A549 (cell line): ENCODE measurements at regions of chr3 and their contacts with region 1.

Region 1: GRCh38 chr3:100334488-100335351 is at the start of gene NIT2:
- DNase-seq: peak; percentile 86
- ATAC-seq: peak; percentile 97 to 98
- H3K4me3 ChIP-seq: peak within 1 kb of the TSS; percentile 93
- H3K27ac ChIP-seq: peak within 1 kb of the TSS; percentile 94 to 96
- H3K4me1 ChIP-seq: peaks cover 12% of the 10 kb centered on the region
- CTCF ChIP-seq: no peak
- EP300 ChIP-seq: no peak
- POLR2A ChIP-seq: peak; percentile 91
- RAD21 ChIP-seq: no peak
- polyA plus RNA-seq, gene NIT2: 122 and 140 TPM in 2 replicates

Region 2: DNA sequence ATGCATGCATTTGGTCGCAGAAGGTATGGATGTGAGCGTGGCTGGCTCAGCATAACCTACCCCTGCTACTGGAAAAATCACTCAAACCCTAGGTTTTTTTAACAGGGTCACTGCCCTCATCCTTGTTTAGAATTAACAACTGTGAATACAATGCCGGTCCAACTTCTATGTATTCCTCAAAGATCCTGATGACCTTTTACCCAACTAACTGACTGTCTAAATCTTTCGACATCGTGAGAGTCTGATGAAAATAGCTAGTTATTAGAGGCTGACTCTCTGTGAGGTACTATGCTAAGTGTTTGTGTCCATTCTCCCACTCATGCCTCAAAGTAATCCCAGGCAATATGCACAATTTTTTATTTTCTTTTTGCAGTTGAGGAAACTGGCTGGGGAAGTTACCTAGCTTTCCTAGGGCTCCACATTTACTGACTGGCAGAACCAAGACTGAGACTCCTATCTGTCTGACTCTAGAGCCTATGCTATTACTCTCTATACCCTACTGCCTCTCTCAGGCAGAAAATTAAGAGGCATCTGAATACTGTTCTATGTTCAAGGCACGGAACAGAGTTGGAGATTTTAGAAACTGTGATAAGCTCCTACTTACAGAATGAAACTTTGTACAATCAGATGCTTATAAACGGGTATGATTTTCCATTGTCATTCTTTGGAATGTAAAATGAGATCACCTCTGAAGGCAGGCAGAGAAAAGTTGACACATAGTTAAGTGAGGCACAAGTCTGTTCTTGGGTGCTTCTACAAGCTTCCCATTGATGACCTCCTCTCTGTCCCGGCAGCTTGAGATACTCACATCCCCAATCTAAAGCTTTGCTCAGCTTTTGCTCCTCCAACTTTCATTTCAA is 276.8 kb before region 1 on chr3:
- CTCF ChIA-PET with region 1: no interaction called
- POLR2A ChIA-PET with region 1: no interaction called
- DNase-seq: no peak
- ATAC-seq: no peak
- H3K4me3 ChIP-seq: no peak overlapping the region
- H3K27ac ChIP-seq: no peak overlapping the region
- H3K4me1 ChIP-seq: no peaks in the 10 kb centered on the region
- CTCF ChIP-seq: no peak
- EP300 ChIP-seq: no peak
- POLR2A ChIP-seq: no peak
- RAD21 ChIP-seq: no peak; a peak in 1 of 5 replicates

Region 3: DNA sequence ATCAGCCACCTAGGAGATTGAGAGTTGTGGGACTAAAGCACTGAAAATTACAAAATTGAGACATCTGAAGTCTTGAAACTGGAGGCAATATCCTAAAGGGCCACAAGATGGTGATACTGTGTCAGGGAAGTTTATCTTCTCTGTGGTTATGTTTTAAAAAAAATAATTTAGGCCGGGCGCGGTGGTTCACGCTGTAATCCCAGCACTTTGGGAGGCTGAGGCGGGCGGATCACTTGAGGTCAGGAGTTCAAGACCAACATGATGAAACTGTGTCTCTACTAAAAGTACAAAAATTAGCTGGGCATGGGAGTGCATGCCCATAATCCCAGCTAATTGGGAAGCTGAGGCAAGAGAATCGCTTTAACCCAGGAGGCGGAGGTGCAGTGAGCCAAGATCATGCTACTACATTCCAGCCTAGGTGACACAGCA is 18.1 kb before region 1 on chr3:
- CTCF ChIA-PET with region 1: interaction called, 34 read pairs
- POLR2A ChIA-PET with region 1: no interaction called
- DNase-seq: peak; percentile 25 to 71
- ATAC-seq: peak; percentile 64 to 90; a peak in 4 of 6 replicates
- H3K4me3 ChIP-seq: no peak overlapping the region
- H3K27ac ChIP-seq: peak overlapping the region in 1 of 2 experiments; percentile 53; a peak in 1 of 6 replicates
- H3K4me1 ChIP-seq: peaks cover 3% of the 10 kb centered on the region; the same call in 1 of the 3 replicates
- CTCF ChIP-seq: peak; percentile 69
- EP300 ChIP-seq: no peak
- POLR2A ChIP-seq: no peak
- RAD21 ChIP-seq: peak; percentile 74 to 79

Region 4: DNA sequence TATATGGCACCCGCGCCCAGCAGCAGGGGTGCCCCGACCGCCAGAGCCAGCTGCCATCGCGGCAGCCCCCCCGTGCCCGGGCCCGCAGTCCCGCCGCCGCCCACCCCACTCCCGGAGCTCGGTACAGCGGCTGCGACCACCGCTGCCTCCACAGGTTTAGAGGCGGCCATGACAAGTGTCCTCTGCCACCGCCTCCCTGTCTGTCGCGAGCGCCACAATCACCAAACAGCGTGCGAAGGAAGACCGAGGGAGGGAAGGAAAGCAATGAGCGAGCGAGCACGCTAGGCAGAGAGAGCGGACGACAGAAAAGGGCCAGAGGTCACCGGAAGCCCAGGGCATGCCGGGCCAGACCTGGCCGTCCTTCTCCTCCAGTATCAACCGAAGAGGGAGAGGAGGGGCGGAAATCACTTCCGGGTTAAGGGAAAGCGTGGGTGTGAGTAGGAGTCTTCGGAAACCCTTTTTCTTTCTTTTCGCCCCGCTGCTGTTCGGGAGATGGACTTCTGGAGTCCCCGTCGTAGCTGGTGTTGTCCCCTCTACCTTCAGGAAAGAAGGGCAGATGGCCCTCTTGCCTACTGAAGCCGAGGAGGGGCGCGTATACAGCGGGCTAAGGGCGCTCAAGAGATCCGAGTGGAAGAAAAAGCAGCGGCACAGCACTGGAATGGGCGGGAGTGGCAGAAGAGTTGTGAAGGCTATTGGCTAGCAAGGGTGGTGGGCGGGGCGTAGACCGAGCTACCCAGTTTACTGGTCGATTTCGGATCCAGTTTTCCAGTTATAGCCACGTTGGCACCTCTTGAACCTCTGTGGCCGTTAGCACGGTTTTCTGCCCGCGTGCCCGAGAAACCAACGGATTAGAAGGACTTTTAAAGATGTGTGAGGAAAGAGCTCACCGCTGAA is 66.3 kb after region 1 on chr3 and contains the starts of genes LNP1 and TOMM70:
- CTCF ChIA-PET with region 1: no interaction called
- POLR2A ChIA-PET with region 1: interaction called, 20 read pairs
- DNase-seq: peak; percentile 76 to 97
- ATAC-seq: peak; percentile 96
- H3K4me3 ChIP-seq: peak within 1 kb of the TSS; percentile 91
- H3K27ac ChIP-seq: peak within 1 kb of the TSS; percentile 93 to 97
- H3K4me1 ChIP-seq: peaks cover 32% of the 10 kb centered on the region; the same call in 1 of the 3 replicates
- CTCF ChIP-seq: no peak
- EP300 ChIP-seq: no peak
- POLR2A ChIP-seq: peak; percentile 83
- RAD21 ChIP-seq: no peak
- polyA plus RNA-seq, gene LNP1: 1.2 and 2.0 TPM in 2 replicates
- polyA plus RNA-seq, gene TOMM70: 48.6 and 61.8 TPM in 2 replicates